AG04450 (cell line): ENCODE measurements at regions of chr6 and their contacts with region 1.

Region 1: DNA sequence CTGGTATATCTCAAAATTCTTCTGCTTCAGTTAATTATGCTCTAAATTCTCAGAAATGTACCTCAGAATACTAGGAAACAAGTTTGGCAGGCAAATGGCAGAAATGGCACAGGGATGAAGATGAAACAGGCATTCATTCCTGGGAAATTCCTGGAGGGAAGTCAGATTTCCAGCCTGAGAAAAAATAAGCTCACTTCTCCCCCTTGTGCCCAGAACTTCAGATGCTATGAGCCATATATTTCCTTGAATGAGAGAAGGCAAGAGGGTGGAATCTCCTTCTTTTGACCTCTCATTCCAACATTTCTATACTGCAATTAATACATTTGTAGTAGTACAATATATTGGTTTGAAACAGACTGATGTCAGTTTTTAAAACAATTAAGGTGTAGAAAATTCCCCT is 22.8 kb downstream of the RGS17 start:
- DNase-seq: no peak
- H3K4me3 ChIP-seq: no peak overlapping the region
- H3K27ac ChIP-seq: no peak overlapping the region
- H3K27me3 ChIP-seq: no peaks in the 10 kb centered on the region
- CTCF ChIP-seq: peak; percentile 48

Region 2: DNA sequence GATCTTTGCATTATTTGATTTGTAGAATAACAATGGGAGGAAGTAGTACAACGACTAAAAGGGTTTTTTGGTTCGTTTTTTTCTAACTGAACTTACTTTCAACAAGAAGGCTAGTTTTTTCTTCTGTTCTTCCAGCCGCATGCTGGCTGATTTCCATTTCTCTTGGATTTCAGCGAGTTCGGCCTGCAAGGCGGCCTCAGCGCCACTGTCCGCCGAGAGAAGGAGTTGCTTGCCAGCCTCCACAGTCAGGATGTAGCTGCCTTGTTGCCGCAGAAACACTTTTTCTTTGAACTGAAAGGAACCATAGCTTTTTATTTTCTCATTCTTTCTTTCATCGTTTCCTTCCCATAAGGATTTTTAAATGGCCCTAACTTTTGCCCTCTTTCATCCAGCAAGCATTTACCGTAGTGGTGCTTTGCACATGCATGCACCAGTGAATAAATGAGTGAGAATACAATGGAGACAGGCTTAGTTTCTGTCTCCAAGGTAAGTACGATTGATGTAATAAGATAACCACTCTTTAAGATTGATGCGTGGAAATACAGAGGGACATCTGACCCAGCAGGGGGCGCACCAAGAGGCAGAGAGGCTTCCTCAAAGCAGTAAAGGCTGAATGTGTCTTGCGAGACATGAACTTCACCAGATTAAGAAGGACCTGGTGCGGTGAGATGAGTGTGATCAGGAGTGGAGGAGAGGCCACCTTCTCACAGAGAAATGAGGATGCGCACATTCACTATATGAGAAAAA is 902.1 kb before region 1 on chr6:
- CTCF ChIA-PET with region 1: no interaction called
- POLR2A ChIA-PET with region 1: no interaction called
- DNase-seq: no peak
- H3K4me3 ChIP-seq: no peak overlapping the region
- H3K27ac ChIP-seq: no peak overlapping the region
- H3K27me3 ChIP-seq: no peaks in the 10 kb centered on the region
- CTCF ChIP-seq: peak; percentile 45

Region 3: GRCh38 chr6:153032255-153032882 is 75.9 kb before region 1 on chr6:
- CTCF ChIA-PET with region 1: interaction called, 20 read pairs
- POLR2A ChIA-PET with region 1: no interaction called
- DNase-seq: peak; percentile 34
- H3K4me3 ChIP-seq: no peak overlapping the region
- H3K27ac ChIP-seq: no peak overlapping the region
- H3K27me3 ChIP-seq: no peaks in the 10 kb centered on the region
- CTCF ChIP-seq: peak; percentile 44; the same call in 1 of the 2 replicates

Region 4: DNA sequence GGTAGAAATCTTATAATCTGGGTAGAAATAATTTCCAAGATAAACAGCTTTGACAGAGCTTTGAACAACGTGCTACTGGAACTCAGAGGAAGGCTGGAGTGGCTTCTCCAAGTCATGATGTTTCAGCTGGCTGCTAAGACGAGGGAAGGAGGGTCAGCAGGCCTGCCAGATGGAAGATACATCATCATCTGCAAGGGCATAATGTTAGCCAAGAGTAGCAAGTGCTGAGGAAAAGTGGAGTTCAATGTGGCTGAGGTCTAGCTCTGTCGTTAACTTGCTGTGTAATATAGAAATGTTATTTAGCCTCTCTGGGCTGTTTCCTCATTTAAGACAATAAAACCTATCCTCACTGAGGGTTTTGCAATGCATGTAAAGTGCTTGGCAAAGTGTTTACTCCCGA is 12.3 kb before region 1 on chr6:
- CTCF ChIA-PET with region 1: interaction called, 10 read pairs
- POLR2A ChIA-PET with region 1: no interaction called
- DNase-seq: no peak
- H3K4me3 ChIP-seq: no peak overlapping the region
- H3K27ac ChIP-seq: no peak overlapping the region
- H3K27me3 ChIP-seq: no peaks in the 10 kb centered on the region
- CTCF ChIP-seq: no peak

Region 5: DNA sequence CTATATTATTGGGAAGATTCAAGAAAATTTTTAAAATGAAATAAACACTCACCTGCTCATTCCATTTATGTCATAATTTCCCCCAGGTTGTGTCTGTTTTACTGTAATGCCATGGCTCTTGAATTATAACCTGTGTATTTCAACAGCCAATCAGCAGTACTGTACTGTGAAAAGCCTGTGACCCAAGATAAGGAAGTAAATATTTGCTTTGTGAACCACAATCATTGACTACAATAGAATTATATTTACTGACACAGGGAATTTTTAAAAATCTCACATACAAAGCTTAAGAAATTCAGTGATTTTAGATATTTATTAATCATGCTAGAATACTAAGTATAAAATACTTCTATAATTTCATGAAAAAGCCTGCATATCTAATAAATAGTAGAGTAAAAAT is 16.7 kb after region 1 on chr6:
- CTCF ChIA-PET with region 1: interaction called, 15 read pairs
- POLR2A ChIA-PET with region 1: no interaction called
- DNase-seq: no peak
- H3K4me3 ChIP-seq: no peak overlapping the region
- H3K27ac ChIP-seq: no peak overlapping the region
- H3K27me3 ChIP-seq: no peaks in the 10 kb centered on the region
- CTCF ChIP-seq: no peak